Activated CD4-positive, alpha-beta T cell treated with anti-CD3 and anti-CD28 coated beads for 36 hours (primary cell): ENCODE measurements at regions of chr19 and their contacts with region 1.

Region 1: GRCh38 chr19:4471403-4472173 is 509 bp upstream of the HDGFL2 start:
- DNase-seq: peak; percentile 98
- ATAC-seq: peak; percentile 90
- H3K4me3 Mint-ChIP-seq: no peak overlapping the region
- H3K27ac Mint-ChIP-seq: no peak overlapping the region
- H3K4me1 Mint-ChIP-seq: peaks cover 21% of the 10 kb centered on the region
- H3K27me3 Mint-ChIP-seq: no peaks in the 10 kb centered on the region

Region 2: GRCh38 chr19:3970808-3971598 is 500.6 kb before region 1 on chr19 and contains the start of gene DAPK3:
- CTCF ChIA-PET with region 1: no interaction called
- POLR2A ChIA-PET with region 1: no interaction called
- intact Hi-C with region 1: no loop called
- DNase-seq: peak; percentile 97
- ATAC-seq: peak; percentile 95
- H3K4me3 Mint-ChIP-seq: peak within 1 kb of the TSS; percentile 83
- H3K27ac Mint-ChIP-seq: peak within 1 kb of the TSS; percentile 58
- H3K4me1 Mint-ChIP-seq: peaks cover 22% of the 10 kb centered on the region
- H3K27me3 Mint-ChIP-seq: no peaks in the 10 kb centered on the region
- total RNA-seq, gene DAPK3: 26.7 to 27.6 TPM

Region 3: DNA sequence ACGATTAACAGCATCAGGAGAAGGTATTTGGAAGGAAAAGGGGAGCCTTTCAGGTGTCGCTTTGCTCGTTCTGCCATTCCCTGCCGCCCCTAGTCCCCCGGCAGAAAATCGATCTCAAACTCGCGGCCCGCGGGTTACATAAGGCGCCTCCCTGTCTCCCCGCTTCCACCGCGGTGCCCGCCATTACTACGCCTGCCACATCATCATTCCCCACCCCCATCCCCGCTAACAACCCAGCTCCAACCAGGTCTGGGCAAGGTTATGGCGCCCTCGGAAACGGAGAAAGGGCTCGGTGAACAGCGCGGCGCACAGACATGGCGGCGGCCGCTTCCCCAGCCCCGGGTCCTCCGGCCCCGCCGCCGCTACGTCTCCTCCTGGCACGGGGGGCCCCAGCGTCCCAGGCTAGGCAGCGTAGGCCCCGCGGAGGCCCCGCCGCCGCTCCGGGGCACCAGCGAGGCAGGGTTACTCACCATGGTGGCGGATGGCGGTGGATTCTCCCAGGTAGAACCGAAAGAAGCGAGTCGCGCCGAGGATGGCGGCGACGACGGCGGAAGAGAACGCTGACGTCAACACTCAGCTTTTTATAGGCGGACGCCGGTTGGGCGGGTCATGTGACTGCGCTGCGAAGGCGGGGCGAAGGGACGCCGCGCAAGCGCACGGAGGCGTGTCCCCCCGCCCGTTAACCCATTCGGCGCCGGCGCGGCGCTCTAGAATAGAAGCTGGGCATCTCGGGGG is 486.5 kb before region 1 on chr19 and contains the start of gene EEF2:
- CTCF ChIA-PET with region 1: no interaction called
- POLR2A ChIA-PET with region 1: no interaction called
- intact Hi-C with region 1: loop called in 1 of 2 experiments (anchors 5 kb)
- DNase-seq: peak; percentile 94
- ATAC-seq: peak; percentile 45
- H3K4me3 Mint-ChIP-seq: peak within 1 kb of the TSS; percentile 87
- H3K27ac Mint-ChIP-seq: peak within 1 kb of the TSS; percentile 94
- H3K4me1 Mint-ChIP-seq: peaks cover 52% of the 10 kb centered on the region
- H3K27me3 Mint-ChIP-seq: no peaks in the 10 kb centered on the region
- total RNA-seq, gene EEF2: 3,116 to 3,255 TPM

Region 4: GRCh38 chr19:4246767-4247593 is 224.6 kb before region 1 on chr19 and contains the start of gene YJU2:
- CTCF ChIA-PET with region 1: no interaction called
- POLR2A ChIA-PET with region 1: interaction called, 4 read pairs
- intact Hi-C with region 1: loop called in 1 of 2 experiments (anchors 1 kb)
- DNase-seq: peak; percentile 100
- ATAC-seq: peak; percentile 97
- H3K4me3 Mint-ChIP-seq: peak within 1 kb of the TSS; percentile 84
- H3K27ac Mint-ChIP-seq: peak within 1 kb of the TSS; percentile 100
- H3K4me1 Mint-ChIP-seq: peaks cover 9% of the 10 kb centered on the region
- H3K27me3 Mint-ChIP-seq: no peaks in the 10 kb centered on the region
- total RNA-seq, gene YJU2: 29.8 to 34.8 TPM

Region 5: GRCh38 chr19:4495471-4495870 is 23.9 kb after region 1 on chr19:
- CTCF ChIA-PET with region 1: no interaction called
- POLR2A ChIA-PET with region 1: no interaction called
- intact Hi-C with region 1: no loop called
- DNase-seq: no peak
- ATAC-seq: no peak
- H3K4me3 Mint-ChIP-seq: no peak overlapping the region
- H3K27ac Mint-ChIP-seq: no peak overlapping the region
- H3K4me1 Mint-ChIP-seq: no peaks in the 10 kb centered on the region
- H3K27me3 Mint-ChIP-seq: no peaks in the 10 kb centered on the region

Region 6: DNA sequence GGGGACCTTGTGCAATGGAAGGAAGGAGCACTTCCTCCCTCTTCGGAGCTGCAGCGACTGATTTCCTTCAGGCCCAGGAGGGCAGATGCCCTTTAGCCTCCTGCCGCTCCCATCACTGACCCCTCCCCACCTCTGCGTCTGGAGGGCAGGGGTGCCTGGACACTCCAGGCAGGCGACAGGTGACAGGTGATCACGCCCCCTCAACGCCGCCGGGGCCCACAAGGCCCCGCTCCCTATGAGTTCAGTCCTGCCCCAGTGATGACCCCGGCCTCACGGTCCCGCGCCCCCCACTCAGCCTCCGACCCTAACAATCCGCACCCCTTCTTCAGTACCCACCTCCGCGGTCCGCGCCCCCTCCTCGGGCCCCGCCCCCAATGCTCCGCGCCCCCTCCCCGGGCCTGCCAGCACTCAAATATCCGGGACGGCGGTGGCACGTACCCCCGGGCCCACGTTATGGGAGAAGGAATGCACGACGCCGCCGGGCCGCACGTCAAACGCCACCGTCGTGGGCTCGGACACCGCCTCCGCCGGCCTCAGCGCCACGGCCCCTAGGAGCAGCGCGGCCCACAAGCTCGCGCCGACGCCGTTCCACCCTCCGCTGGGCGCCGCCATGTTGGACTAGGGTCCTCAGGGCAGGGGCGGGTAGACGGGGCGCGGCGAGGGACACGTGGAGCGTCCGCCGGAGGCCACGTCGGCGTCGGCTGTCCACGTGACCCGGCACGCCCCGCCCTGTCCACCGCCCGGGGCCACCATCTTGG is 198.3 kb after region 1 on chr19 and contains the start of gene MYDGF:
- CTCF ChIA-PET with region 1: no interaction called
- POLR2A ChIA-PET with region 1: no interaction called
- intact Hi-C with region 1: loop called in 1 of 2 experiments (anchors 1 kb)
- DNase-seq: peak; percentile 97
- ATAC-seq: peak; percentile 99
- H3K4me3 Mint-ChIP-seq: peak within 1 kb of the TSS; percentile 85
- H3K27ac Mint-ChIP-seq: peak within 1 kb of the TSS; percentile 75
- H3K4me1 Mint-ChIP-seq: peaks cover 18% of the 10 kb centered on the region
- H3K27me3 Mint-ChIP-seq: no peaks in the 10 kb centered on the region
- total RNA-seq, gene MYDGF: 34.7 to 53.8 TPM

Region 7: DNA sequence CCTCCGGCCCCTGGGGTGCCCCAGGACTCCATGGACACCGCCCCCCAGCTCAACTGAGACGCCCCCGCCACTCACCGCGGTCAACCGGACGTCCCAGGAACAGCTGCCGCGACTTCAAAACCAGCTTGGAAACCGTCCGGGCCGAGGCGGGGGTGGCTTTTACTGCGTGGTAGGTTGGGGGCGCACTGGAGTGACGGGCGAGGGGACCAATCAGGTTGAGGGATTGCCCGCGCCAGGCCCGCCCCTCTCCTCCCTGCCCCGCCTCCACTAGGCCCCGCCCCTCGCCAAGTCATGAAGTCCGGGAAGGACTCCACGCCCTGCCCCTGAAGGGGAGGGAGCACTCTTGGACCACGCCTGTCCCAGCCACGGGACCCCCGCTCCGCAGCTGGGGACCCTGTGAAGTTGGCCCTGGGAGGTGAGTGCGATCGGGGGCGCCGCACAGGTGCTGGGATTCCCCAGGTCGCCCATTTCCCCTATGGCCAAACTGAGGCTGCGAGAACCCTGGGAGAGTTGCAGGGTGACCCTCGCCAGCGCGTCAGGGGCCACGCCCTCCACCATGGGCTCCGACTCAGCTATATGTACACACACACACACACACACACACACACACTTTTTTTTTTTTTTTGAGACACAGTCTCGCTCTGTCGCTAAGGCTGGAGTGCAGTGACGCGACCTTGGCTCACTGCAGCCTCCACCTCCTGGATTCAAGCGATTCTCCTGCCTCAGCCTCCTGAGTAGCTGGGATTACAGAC is 396.1 kb after region 1 on chr19 and contains the start of gene PLIN3:
- CTCF ChIA-PET with region 1: no interaction called
- POLR2A ChIA-PET with region 1: no interaction called
- intact Hi-C with region 1: loop called in 1 of 2 experiments (anchors 1 kb)
- DNase-seq: peak; percentile 98
- ATAC-seq: peak; percentile 95
- H3K4me3 Mint-ChIP-seq: peak within 1 kb of the TSS; percentile 73
- H3K27ac Mint-ChIP-seq: peak within 1 kb of the TSS; percentile 63
- H3K4me1 Mint-ChIP-seq: peaks cover 20% of the 10 kb centered on the region
- H3K27me3 Mint-ChIP-seq: peaks cover 2% of the 10 kb centered on the region
- total RNA-seq, gene PLIN3: 26.9 to 27.5 TPM

Region 8: DNA sequence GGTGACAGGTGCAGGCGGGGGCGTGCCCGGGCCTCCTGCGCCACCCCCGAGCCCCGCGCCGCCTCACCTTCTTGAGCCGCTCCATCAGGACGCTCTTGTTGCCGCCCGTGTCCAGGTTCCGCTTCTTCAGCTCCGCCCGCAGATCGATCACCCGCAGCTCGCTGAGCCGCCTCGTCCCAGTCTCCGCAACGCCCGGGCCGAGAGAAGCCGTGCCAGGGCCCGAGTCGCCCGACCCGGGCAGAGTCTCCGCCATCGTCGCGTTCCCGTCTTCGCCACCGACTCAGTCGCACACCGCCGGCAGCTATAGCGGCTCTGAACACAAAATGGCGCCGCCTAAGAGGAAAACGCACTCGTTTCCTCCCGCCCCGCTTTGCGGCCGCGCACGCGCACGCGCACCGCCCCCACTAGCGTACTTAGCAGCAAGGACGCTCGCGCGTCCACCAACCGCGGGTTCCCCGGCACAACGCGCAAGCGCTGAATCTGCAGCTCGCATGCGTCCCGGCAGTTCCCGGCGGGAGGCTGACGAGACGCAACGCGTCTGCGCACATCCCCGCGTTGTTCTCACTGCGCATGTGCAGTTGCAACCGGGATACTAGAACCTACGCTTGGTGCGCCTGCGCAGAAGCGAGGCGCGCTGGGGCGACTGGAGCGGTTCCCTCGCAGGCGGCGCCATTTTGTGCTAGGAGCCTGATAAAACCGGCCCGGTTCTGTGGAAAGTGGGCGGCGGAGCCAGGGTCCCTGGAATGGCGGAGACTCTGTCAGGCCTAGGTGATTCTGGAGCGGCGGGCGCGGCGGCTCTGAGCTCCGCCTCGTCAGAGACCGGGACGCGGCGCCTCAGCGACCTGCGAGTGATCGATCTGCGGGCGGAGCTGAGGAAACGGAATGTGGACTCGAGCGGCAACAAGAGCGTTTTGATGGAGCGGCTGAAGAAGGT is 1151.1 kb after region 1 on chr19 and contains the starts of genes SAFB and SAFB2:
- CTCF ChIA-PET with region 1: no interaction called
- POLR2A ChIA-PET with region 1: no interaction called
- intact Hi-C with region 1: loop called in 1 of 2 experiments (anchors 2 kb)
- DNase-seq: peak; percentile 100
- ATAC-seq: peak; percentile 92
- H3K4me3 Mint-ChIP-seq: peak within 1 kb of the TSS; percentile 100
- H3K27ac Mint-ChIP-seq: peak within 1 kb of the TSS; percentile 100
- H3K4me1 Mint-ChIP-seq: peaks cover 66% of the 10 kb centered on the region
- H3K27me3 Mint-ChIP-seq: no peaks in the 10 kb centered on the region
- total RNA-seq, gene SAFB: 100 to 118 TPM
- total RNA-seq, gene SAFB2: 65.0 to 78.6 TPM